ENCODE measurements at regions of chr21 and their contacts with region 1.

Region 1: DNA sequence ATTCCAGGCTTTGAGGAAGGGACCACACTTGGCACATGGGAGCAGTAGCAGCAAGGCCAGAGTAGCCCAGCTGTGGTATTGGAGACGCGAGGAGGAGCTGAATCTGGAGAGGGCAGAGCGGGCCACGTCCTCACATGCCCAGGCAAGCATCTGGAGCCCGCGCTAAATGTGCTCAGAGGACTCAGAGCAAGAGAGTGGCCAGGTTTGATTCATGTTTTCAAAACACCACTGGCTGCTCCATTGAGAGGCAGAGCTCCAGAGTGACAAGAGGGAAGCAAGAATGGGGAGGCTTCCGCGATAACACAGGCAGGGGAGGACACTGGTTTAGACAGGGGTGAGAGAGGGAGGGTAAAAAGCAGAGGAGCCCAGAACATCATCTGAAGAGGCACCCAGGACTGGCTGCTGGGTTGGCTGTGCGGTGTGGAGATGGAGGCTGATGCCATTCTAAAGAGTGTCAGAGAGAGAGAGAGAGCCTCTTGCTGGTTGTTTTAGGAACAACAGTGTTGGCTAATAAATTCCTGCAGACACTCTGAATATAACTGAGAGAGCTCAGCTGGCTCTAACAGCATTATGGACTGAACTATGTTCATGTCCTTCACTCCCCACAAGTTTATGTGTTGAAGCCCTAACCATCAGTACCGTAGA is 32.3 kb downstream of the RCAN1 start:
- DNase-seq: peak in 1 of 2 experiments; percentile 27
- H3K4me3 ChIP-seq: no peak overlapping the region
- H3K4me3 Mint-ChIP-seq: no peak overlapping the region
- H3K27ac Mint-ChIP-seq: no peak overlapping the region
- H3K4me1 ChIP-seq: no peaks in the 10 kb centered on the region
- H3K4me1 Mint-ChIP-seq: no peaks in the 10 kb centered on the region
- H3K27me3 ChIP-seq: no peaks in the 10 kb centered on the region
- H3K27me3 Mint-ChIP-seq: no peaks in the 10 kb centered on the region
- CTCF ChIP-seq: peak; percentile 20 to 46

Region 2: GRCh38 chr21:34510148-34511142 is 72.2 kb before region 1 on chr21:
- CTCF ChIA-PET with region 1: interaction called, 14 read pairs
- POLR2A ChIA-PET with region 1: no interaction called
- intact Hi-C with region 1: no loop called
- DNase-seq: peak; percentile 72 to 77
- H3K4me3 ChIP-seq: no peak overlapping the region
- H3K4me3 Mint-ChIP-seq: no peak overlapping the region
- H3K27ac Mint-ChIP-seq: peak overlapping the region; percentile 59
- H3K4me1 ChIP-seq: no peaks in the 10 kb centered on the region
- H3K4me1 Mint-ChIP-seq: peaks cover 6% of the 10 kb centered on the region
- H3K27me3 ChIP-seq: no peaks in the 10 kb centered on the region
- H3K27me3 Mint-ChIP-seq: no peaks in the 10 kb centered on the region
- CTCF ChIP-seq: peak; percentile 52 to 79